GM12878 (cell line): ENCODE measurements at regions of chr5 and their contacts with region 1.

Region 1: DNA sequence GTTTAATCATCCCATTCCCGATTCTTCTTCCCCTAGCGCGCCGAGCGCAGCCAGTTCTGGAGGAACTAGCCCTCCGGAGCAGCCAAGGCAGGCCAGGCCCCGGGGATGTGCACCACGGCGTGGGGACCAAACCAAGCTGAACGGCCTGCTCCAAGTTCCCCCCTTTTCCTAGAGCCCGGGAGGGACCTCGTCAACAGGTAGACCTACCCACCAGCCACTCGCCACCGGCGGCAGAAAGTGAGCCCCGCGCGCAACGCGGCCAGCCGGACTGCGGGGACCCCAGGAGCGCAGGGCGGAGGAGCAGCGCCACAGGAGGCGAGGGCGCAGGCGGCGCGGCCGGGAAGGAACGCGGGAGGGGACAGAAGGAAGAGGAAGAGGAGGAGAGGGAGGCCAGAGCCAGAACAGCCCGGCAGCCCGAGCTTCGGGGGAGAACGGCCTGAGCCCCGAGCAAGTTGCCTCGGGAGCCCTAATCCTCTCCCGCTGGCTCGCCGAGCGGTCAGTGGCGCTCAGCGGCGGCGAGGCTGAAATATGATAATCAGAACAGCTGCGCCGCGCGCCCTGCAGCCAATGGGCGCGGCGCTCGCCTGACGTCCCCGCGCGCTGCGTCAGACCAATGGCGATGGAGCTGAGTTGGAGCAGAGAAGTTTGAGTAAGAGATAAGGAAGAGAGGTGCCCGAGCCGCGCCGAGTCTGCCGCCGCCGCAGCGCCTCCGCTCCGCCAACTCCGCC is at the start of gene ISL1:
- DNase-seq: no peak
- ATAC-seq: no peak
- H3K4me3 ChIP-seq: no peak within 1 kb of the TSS
- H3K27ac ChIP-seq: no peak within 1 kb of the TSS
- H3K4me1 ChIP-seq: no peaks in the 10 kb centered on the region
- H3K27me3 ChIP-seq: peaks cover 8 to 18% of the 10 kb centered on the region in 2 experiments
- CTCF ChIP-seq: no peak
- EP300 ChIP-seq: no peak
- POLR2A ChIP-seq: no peak
- RAD21 ChIP-seq: no peak
- polyA plus RNA-seq, gene ISL1: not detected

Region 2: GRCh38 chr5:51104556-51104955 is 278.4 kb before region 1 on chr5:
- CTCF ChIA-PET with region 1: no interaction called
- POLR2A ChIA-PET with region 1: no interaction called
- RAD21 ChIA-PET with region 1: no interaction called
- SMC1A ChIA-PET with region 1: no interaction called
- in situ Hi-C with region 1: no loop called
- intact Hi-C with region 1: no loop called
- DNase-seq: no peak
- ATAC-seq: no peak
- H3K4me3 ChIP-seq: no peak overlapping the region
- H3K27ac ChIP-seq: no peak overlapping the region
- H3K4me1 ChIP-seq: no peaks in the 10 kb centered on the region
- H3K27me3 ChIP-seq: no peaks in the 10 kb centered on the region
- CTCF ChIP-seq: no peak
- EP300 ChIP-seq: no peak
- POLR2A ChIP-seq: no peak
- RAD21 ChIP-seq: no peak

Region 3: GRCh38 chr5:51567636-51568035 is 184.7 kb after region 1 on chr5:
- CTCF ChIA-PET with region 1: no interaction called
- POLR2A ChIA-PET with region 1: no interaction called
- RAD21 ChIA-PET with region 1: no interaction called
- SMC1A ChIA-PET with region 1: no interaction called
- in situ Hi-C with region 1: no loop called
- intact Hi-C with region 1: no loop called
- DNase-seq: no peak
- ATAC-seq: no peak
- H3K4me3 ChIP-seq: no peak overlapping the region
- H3K27ac ChIP-seq: no peak overlapping the region
- H3K4me1 ChIP-seq: no peaks in the 10 kb centered on the region
- H3K27me3 ChIP-seq: no peaks in the 10 kb centered on the region
- CTCF ChIP-seq: no peak
- EP300 ChIP-seq: no peak
- POLR2A ChIP-seq: no peak
- RAD21 ChIP-seq: no peak

Region 4: DNA sequence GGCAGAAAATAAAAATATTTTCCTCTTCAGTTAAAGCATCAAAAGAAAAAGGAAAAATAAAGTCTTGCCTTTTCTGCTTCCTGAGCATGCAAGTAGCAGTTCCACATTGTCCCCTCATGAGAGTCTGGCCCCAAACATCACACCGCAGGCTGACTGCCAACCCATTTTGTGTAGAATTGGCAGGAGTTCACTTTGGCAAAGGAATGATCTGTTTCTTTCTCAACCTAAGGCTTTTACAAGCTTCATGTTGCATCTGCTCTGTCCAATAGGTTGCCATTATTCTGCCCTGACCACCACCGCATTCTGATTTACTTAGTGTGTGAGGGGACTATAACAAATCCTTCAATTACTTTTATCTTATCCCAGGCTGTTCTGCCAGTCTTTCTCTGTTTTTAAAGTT is 249.9 kb after region 1 on chr5:
- CTCF ChIA-PET with region 1: no interaction called
- POLR2A ChIA-PET with region 1: no interaction called
- RAD21 ChIA-PET with region 1: no interaction called
- SMC1A ChIA-PET with region 1: no interaction called
- in situ Hi-C with region 1: no loop called
- intact Hi-C with region 1: no loop called
- DNase-seq: no peak
- ATAC-seq: no peak
- H3K4me3 ChIP-seq: no peak overlapping the region
- H3K27ac ChIP-seq: no peak overlapping the region
- H3K4me1 ChIP-seq: no peaks in the 10 kb centered on the region
- H3K27me3 ChIP-seq: no peaks in the 10 kb centered on the region
- CTCF ChIP-seq: no peak
- EP300 ChIP-seq: no peak
- POLR2A ChIP-seq: no peak
- RAD21 ChIP-seq: no peak

Region 5: DNA sequence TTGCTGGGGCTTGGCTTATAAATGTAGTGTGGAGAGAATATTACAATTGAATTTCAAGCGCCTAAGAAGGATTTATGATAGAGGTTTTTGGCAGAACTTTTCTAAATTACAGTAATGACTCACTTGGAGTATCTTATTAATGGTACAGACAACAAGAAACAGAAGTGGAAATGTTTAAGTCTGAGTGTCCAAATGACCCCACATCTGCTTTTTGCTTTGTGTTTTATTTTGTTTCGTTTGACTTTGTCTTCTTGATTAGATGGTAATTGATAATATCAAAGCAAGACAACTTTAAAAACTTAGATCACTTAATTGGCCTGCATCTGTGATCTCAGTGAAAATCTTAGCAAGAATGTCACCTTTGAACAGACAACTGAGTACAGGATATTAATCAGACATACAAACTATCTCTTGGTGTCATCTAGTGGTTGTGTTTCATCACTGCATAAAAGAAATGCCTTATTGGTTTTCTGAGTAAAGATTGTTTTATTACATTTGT is 577.7 kb after region 1 on chr5:
- CTCF ChIA-PET with region 1: no interaction called
- POLR2A ChIA-PET with region 1: no interaction called
- RAD21 ChIA-PET with region 1: no interaction called
- SMC1A ChIA-PET with region 1: no interaction called
- in situ Hi-C with region 1: no loop called
- intact Hi-C with region 1: loop called (anchors 2 kb)
- DNase-seq: no peak
- ATAC-seq: peak; percentile 58
- H3K4me3 ChIP-seq: no peak overlapping the region
- H3K27ac ChIP-seq: no peak overlapping the region
- H3K4me1 ChIP-seq: no peaks in the 10 kb centered on the region
- H3K27me3 ChIP-seq: no peaks in the 10 kb centered on the region; a peak in 1 of 4 replicates
- CTCF ChIP-seq: peak in 2 of 3 experiments; percentile 24 to 56; a peak in 1 of 6 replicates
- EP300 ChIP-seq: no peak
- POLR2A ChIP-seq: no peak
- RAD21 ChIP-seq: peak; percentile 56

Region 6: DNA sequence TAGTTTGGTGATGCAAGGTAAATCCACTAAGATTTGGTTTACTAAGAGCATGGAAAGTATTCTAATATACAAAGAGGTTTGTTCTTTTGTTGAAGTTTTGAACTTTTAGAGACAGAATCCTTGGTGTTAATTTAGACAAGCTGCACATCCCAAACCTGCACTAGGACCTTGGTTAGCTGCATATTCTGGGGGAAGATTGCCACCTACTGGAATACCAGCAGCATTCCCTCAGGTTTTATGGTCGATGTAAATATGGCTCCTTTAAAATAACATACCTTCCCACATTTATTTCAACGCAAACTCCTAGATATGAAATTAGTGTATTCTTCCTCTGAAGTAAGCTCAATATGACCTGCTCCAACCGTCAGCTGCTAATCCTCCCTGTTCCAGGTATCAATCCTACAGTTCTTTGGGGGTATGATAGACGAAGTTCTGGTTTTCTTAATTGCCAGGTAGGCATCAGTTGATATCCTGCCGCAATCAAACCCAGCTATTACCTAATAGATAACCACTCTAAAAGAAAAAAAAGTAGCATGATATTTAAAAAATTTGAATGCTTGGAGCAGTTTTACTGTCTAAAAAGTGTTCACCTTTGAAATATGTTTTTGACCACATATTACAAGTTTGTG is 624.4 kb after region 1 on chr5:
- CTCF ChIA-PET with region 1: interaction called, 6 read pairs
- POLR2A ChIA-PET with region 1: no interaction called
- RAD21 ChIA-PET with region 1: no interaction called
- SMC1A ChIA-PET with region 1: no interaction called
- in situ Hi-C with region 1: no loop called
- intact Hi-C with region 1: loop called (anchors 10 kb)
- DNase-seq: no peak
- ATAC-seq: peak; percentile 69
- H3K4me3 ChIP-seq: no peak overlapping the region
- H3K27ac ChIP-seq: no peak overlapping the region
- H3K4me1 ChIP-seq: no peaks in the 10 kb centered on the region
- H3K27me3 ChIP-seq: no peaks in the 10 kb centered on the region
- CTCF ChIP-seq: peak; percentile 44 to 73 (median 49); a peak in 5 of 6 replicates
- EP300 ChIP-seq: no peak
- POLR2A ChIP-seq: no peak
- RAD21 ChIP-seq: peak; percentile 74

Region 7: DNA sequence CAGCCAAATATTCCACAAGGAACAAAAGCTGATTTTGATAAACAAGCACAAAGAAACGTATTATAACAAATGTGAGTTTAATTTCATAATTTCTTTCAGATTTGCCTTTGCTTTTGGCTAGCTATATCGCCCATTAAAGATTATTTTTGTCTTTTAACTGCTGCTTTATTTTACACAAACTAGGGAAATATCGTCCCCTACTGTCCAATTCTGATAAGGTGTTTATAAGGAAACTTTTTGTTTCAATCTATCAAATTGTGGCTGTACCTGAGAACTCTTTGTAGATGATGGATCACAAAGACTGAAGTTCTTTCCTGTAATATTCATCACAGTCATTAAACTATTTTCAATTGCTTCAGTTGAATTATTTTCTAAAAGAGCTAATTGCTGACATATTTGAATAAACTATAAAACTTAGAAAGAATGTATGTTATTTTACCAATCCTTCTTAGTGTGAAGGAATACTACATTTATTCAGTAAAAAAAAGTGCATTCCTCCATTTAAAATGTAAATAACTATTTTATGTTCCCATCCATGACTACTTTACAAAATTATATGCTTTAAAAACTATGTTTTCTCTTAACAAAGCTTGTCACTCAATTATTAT is 973.5 kb after region 1 on chr5:
- CTCF ChIA-PET with region 1: interaction called, 3 read pairs
- POLR2A ChIA-PET with region 1: no interaction called
- RAD21 ChIA-PET with region 1: no interaction called
- SMC1A ChIA-PET with region 1: no interaction called
- in situ Hi-C with region 1: no loop called
- intact Hi-C with region 1: loop called (anchors 10 kb)
- DNase-seq: no peak
- ATAC-seq: no peak
- H3K4me3 ChIP-seq: no peak overlapping the region
- H3K27ac ChIP-seq: no peak overlapping the region
- H3K4me1 ChIP-seq: no peaks in the 10 kb centered on the region
- H3K27me3 ChIP-seq: no peaks in the 10 kb centered on the region
- CTCF ChIP-seq: peak; percentile 45 to 52 (median 48); a peak in 4 of 6 replicates
- EP300 ChIP-seq: no peak
- POLR2A ChIP-seq: no peak
- RAD21 ChIP-seq: peak; percentile 49

Region 8: GRCh38 chr5:52657247-52657645 is 1274.3 kb after region 1 on chr5:
- CTCF ChIA-PET with region 1: no interaction called
- POLR2A ChIA-PET with region 1: no interaction called
- RAD21 ChIA-PET with region 1: no interaction called
- SMC1A ChIA-PET with region 1: no interaction called
- in situ Hi-C with region 1: loop called (anchors 25 kb)
- intact Hi-C with region 1: loop called (anchors 5 kb)
- DNase-seq: no peak
- ATAC-seq: peak; percentile 31; the same call in 1 of the 3 replicates
- H3K4me3 ChIP-seq: no peak overlapping the region
- H3K27ac ChIP-seq: no peak overlapping the region
- H3K4me1 ChIP-seq: no peaks in the 10 kb centered on the region
- H3K27me3 ChIP-seq: no peaks in the 10 kb centered on the region; a peak in 1 of 4 replicates
- CTCF ChIP-seq: peak; percentile 26 to 46 (median 33); a peak in 4 of 6 replicates
- EP300 ChIP-seq: no peak
- POLR2A ChIP-seq: no peak
- RAD21 ChIP-seq: peak; percentile 57